Vagina (tissue), 2 donors: ENCODE measurements at regions of chr4 and their contacts with region 1.

Region 1: DNA sequence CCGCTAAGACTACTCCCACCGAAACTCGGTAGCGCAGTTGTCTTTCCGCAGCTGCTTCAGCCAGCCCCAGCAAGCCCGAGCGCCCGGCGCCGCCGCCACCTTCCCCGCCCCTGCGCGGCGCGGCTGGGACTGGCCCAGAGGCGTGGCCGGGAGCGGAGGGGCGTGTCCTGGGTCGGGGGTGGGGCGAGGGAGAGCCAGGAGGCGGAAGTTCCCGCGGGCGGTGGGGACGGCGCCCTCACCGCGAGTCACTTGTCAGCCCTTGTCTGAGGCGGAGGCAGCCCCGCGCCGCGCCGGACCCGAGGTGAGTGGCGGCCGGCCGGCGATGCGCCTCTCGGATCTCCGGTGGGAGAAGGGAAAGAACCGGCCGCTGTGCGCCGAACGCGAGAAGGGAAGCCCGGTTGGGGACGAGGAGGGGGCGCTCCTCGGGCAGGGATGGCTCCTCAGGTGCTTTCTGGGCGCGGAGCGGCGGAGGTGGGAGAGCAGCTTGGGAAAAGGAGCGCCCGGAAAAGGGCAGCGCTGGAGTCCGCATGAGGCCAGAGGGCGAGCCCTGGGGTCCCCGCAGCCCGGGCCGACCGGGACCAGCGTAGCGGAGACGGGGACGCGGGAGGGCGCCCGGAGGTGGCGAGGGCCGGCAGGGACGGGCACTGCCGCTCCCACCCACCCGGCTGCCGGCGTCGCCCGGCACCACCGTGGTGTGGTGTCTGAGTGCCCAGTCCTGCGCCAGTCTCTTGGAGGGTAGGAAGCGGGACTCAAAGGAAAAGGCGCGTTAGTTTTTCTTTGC is at the start of gene PDLIM5:
- DNase-seq: peak; percentile 95 to 97
- H3K4me3 ChIP-seq: peak within 1 kb of the TSS; percentile 81 to 97
- H3K27ac ChIP-seq: peak within 1 kb of the TSS; percentile 98
- H3K4me1 ChIP-seq: peaks cover 14% of the 10 kb centered on the region
- H3K27me3 ChIP-seq: no peaks in the 10 kb centered on the region
- CTCF ChIP-seq: no peak
- POLR2A ChIP-seq: peak in 1 of 2 donors; percentile 91
- total RNA-seq, gene PDLIM5: 137 TPM

Region 2: DNA sequence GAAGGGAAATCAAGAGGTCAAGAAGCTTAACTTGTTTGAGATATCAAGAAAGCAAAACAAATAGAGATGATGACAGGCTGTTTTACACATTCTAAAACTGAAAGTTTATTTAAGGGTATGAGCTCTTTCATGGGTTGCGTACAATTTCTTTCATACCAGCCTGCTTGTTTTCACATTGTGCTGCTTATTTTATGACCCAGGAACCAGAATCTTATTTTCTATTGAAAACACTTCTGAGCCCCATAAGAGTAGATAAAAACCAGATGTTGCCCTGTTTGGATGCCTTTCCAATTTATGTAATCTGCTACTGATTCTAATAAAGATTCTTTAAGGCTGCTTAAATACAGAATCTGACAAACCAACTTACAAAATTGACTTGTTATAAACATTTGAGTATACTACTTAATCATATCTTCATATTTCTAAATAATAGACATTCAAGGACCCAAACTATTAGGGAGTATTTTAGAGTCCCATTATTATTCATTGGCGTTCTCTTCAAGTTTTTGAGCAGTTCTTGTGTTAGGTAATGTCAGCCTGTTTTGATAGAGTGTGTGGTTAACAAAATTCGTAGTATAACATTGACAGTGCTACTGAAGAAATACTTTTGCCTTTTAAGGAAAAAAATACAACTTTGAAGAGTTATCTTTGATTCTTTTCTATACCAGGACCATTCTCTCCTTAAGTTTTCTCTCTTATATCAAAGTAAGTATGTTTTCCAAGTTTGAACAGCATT is 74.3 kb after region 1 on chr4:
- intact Hi-C with region 1: loop called (anchors 10 kb)
- DNase-seq: no peak
- H3K4me3 ChIP-seq: no peak overlapping the region
- H3K27ac ChIP-seq: peak overlapping the region; percentile 7
- H3K4me1 ChIP-seq: peaks cover 28% of the 10 kb centered on the region
- H3K27me3 ChIP-seq: no peaks in the 10 kb centered on the region
- CTCF ChIP-seq: no peak
- POLR2A ChIP-seq: no peak

Region 3: GRCh38 chr4:94561249-94562024 is 109.6 kb after region 1 on chr4:
- intact Hi-C with region 1: loop called (anchors 10 kb)
- DNase-seq: no peak
- H3K4me3 ChIP-seq: no peak overlapping the region
- H3K27ac ChIP-seq: peak overlapping the region; percentile 2
- H3K4me1 ChIP-seq: peaks cover 48% of the 10 kb centered on the region
- H3K27me3 ChIP-seq: no peaks in the 10 kb centered on the region
- CTCF ChIP-seq: no peak
- POLR2A ChIP-seq: no peak